Ascending aorta (tissue), 2 donors: ENCODE measurements at regions of chr2 and their contacts with region 1.

Region 1: DNA sequence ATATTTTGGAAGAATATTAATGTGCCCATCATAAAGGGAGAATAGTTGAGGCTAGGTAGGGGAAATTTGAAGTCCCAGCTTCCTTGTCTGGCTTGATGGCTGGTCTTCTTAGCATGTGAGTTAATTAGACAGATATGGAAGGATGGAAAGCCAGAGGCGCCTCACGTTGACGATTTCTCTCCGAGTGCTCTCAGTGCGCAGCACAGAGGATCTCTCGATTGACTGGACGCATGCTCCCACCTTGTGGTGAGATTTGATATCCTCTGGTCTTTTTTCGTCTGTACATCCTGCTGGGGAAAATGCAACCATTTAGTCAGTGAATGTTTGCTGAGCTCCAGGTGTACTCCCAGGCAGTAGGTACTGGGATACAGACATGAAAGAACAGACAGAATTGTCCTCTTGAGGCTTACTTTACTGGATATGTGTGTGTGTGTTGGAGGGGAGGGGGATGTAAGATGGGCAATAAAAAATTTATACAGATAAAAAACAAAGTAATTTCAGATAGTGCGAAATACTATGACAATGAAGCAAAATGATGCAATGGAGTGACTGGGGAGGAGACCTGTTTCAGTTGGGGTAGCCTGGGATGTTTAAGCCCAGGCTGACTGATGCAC is 66.9 kb upstream of the ZNG1B start:
- DNase-seq: peak in 1 of 2 donors; percentile 76
- H3K4me3 ChIP-seq: no peak overlapping the region
- H3K27ac ChIP-seq: no peak overlapping the region
- H3K4me1 ChIP-seq: no peaks in the 10 kb centered on the region
- H3K27me3 ChIP-seq: no peaks in the 10 kb centered on the region
- CTCF ChIP-seq: peak; percentile 60 to 76 (median 76)

Region 2: GRCh38 chr2:113138428-113139322 is 231.9 kb before region 1 on chr2:
- intact Hi-C with region 1: loop called (anchors 5 kb)
- DNase-seq: peak in 1 of 2 donors; percentile 61
- H3K4me3 ChIP-seq: no peak overlapping the region
- H3K27ac ChIP-seq: no peak overlapping the region
- H3K4me1 ChIP-seq: no peaks in the 10 kb centered on the region
- H3K27me3 ChIP-seq: no peaks in the 10 kb centered on the region
- CTCF ChIP-seq: peak; percentile 16 to 62 (median 58)

Region 3: DNA sequence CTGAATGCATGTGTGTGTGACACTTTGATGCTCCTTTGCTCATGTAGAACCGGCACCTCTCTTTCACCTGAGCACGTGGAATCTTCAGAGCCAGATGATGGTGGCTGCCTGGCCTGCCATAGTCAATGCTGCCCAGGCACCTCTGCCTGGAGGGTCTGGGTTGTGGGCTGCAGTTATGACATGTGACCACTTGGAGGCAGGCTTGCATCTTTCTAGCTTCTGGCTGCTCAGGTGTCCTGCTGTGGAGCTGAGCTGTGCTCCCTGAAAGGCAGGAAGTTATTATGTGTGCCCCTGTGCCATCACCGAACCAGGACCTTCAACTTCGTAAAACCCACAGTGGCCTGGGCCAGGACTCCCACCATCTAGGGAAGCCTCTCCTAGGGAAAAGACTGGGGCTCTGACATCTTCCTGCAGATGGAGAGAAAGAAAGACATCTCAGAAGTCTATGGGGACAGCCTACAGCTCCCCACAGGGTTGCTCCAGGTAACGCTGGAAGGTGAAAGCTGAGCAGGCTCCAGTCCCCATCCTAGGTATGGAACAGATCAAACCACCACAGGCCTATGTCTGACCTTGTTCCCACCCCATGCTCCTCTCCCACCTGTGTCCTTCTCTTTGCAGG is 166.6 kb before region 1 on chr2:
- intact Hi-C with region 1: loop called (anchors 2 kb)
- DNase-seq: peak in 1 of 2 donors; percentile 78
- H3K4me3 ChIP-seq: no peak overlapping the region
- H3K27ac ChIP-seq: no peak overlapping the region
- H3K4me1 ChIP-seq: no peaks in the 10 kb centered on the region
- H3K27me3 ChIP-seq: no peaks in the 10 kb centered on the region
- CTCF ChIP-seq: peak; percentile 66 to 85 (median 68)